OCI-LY7 (cell line): ENCODE measurements at regions of chr6 and their contacts with region 1.

Region 1: GRCh38 chr6:154683756-154684523 is 49.3 kb upstream of the SCAF8 start:
- DNase-seq: peak; percentile 69
- H3K4me3 ChIP-seq: peak overlapping the region; percentile 26
- H3K27ac ChIP-seq: peak overlapping the region; percentile 69
- H3K4me1 ChIP-seq: peaks cover 26% of the 10 kb centered on the region
- CTCF ChIP-seq: no peak

Region 2: DNA sequence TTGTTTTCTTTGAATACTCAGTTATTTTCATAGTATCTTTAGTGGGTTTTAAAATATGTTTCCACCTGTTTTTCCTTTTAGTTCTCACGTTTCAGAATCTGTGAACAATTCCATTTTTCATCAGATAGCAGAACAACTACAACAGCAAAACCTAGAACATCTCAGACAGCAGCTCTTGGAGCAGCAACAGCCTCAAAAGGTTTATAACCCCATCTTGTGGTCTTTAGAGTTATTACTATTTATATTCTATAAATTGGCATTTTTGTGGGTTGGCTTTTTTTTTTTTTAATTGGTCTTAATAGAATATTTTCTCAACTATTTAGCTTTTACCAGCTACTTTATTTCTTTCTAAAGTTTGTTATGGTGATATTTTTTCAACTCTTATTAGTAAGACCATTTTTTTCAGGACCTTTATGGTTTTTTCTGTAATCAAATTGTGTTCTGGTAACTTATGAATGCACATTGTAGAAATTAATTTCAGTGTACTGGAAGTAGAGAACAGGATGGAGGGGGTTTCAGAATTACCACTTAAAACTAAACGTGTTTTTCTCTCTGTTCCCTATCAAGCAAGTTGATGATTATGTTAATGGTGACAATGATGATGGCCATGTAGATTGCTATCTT is 121.5 kb after region 1 on chr6:
- CTCF ChIA-PET with region 1: no interaction called
- POLR2A ChIA-PET with region 1: interaction called, 3 read pairs
- intact Hi-C with region 1: loop called (anchors 1 kb)
- DNase-seq: peak; percentile 59
- H3K4me3 ChIP-seq: no peak overlapping the region
- H3K27ac ChIP-seq: no peak overlapping the region
- H3K4me1 ChIP-seq: peaks cover 3% of the 10 kb centered on the region
- CTCF ChIP-seq: peak; percentile 79